GM12878 (cell line): ENCODE measurements at regions of chr17 and their contacts with region 1.

Region 1: GRCh38 chr17:48074315-48075081 is 26.3 kb downstream of the NFE2L1 start:
- DNase-seq: no peak
- ATAC-seq: peak; percentile 84
- H3K4me3 ChIP-seq: no peak overlapping the region
- H3K27ac ChIP-seq: no peak overlapping the region
- H3K4me1 ChIP-seq: no peaks in the 10 kb centered on the region
- H3K27me3 ChIP-seq: no peaks in the 10 kb centered on the region
- CTCF ChIP-seq: peak; percentile 75 to 91 (median 79)
- EP300 ChIP-seq: no peak
- POLR2A ChIP-seq: no peak
- RAD21 ChIP-seq: peak; percentile 86

Region 2: DNA sequence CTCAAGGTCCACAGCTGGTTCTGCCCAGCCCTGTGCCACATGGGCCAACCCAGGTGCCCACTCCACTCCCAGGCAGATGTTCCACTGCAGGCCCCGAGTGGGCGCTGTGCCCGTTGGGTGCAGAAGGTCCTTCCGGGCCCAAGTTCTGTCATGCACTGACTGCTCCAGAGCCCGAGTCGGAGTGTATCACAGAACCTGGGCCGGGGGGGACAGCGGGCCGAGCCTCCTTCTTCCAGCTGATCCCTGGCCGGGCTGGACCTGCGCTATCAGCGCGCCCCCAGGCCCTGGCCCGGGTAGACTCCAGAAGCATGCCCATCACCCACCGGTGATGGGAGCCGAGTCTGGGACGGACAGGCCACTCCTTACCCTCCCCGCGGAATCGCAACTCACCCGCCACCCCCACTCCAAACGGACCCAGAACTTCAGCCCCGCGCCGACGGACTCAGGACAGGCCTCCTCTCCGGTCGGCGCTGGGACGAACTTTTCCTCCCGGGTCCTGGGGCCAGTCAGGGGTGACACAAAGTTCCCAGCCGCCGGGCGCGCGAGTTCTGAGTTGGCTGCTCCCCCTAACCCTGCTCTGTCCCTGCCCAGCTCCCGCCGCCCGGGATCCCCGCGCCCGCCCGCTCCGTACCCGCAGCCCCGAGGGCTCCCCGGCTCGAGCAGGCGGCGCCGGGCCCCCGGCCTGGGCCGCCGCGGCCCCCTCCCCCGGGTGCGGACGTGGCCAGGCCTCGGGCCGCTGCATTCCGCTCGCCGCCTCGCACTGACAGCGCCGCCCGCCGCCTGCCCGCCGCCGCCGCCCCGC is 37.3 kb before region 1 on chr17 and contains the start of gene COPZ2:
- CTCF ChIA-PET with region 1: interaction called, 176 read pairs
- POLR2A ChIA-PET with region 1: interaction called, 3 read pairs
- RAD21 ChIA-PET with region 1: interaction called, 6 read pairs
- SMC1A ChIA-PET with region 1: interaction called, 14 read pairs
- in situ Hi-C with region 1: no loop called
- intact Hi-C with region 1: no loop called
- DNase-seq: no peak
- ATAC-seq: peak; percentile 93
- H3K4me3 ChIP-seq: peak within 1 kb of the TSS; percentile 73
- H3K27ac ChIP-seq: no peak within 1 kb of the TSS
- H3K4me1 ChIP-seq: peaks cover 9% of the 10 kb centered on the region
- H3K27me3 ChIP-seq: peaks cover 3 to 4% of the 10 kb centered on the region in 2 experiments; a peak in 3 of 4 replicates
- CTCF ChIP-seq: peak; percentile 67 to 91 (median 73)
- EP300 ChIP-seq: no peak
- POLR2A ChIP-seq: no peak
- RAD21 ChIP-seq: peak; percentile 20; the same call in 1 of the 2 replicates
- polyA plus RNA-seq, gene COPZ2: 2.5 to 2.9 TPM

Region 3: DNA sequence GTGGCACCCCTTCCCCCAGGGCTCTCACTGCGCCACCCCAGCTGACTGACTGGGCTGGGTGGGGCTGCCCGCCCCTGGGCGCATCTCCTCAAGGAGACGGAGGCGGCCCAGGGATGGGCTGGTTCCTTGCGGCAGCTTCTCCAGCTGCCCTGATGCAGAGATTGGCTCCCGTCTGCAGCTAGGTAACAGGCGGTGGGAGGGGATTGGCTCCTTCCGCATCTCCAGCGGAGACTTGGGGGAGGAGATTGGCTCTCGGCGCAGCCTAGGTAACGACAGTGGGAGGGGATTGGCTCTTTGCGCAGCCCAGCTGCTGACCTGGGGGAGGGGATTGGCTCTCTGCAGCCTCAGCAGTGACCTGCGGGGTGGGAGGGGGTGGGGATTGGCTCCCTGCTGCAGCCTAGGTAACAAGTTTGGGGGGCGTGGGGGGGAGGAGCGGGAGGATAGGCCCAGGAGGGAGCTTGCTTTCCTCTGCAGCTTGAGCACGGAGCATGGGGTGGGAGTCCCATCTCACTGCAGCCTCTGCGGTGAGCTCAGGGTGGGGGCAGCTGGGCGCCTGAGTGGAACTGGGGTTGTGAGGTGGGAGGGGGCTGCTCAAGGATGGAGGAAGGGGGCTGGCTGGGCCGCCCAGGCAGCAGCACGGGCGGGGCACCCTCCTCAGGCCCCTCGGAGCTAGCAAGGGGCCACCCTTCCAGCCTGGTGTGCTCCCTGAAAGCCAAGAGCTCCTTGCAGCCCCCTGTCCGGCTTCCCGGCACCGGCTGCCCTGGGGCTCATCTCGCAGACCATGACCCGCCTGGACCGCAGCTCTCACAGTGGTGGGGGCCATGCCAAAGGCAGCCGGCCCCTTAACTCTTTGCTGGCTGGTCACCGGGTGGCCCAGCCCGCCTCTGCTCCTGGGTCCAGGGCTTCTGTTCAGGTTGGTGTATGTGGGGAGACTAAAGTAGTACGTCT is 20.0 kb before region 1 on chr17:
- CTCF ChIA-PET with region 1: interaction called, 43 read pairs
- POLR2A ChIA-PET with region 1: interaction called, 6 read pairs
- RAD21 ChIA-PET with region 1: interaction called, 5 read pairs
- SMC1A ChIA-PET with region 1: interaction called, 15 read pairs
- in situ Hi-C with region 1: no loop called
- intact Hi-C with region 1: no loop called
- DNase-seq: no peak
- ATAC-seq: peak; percentile 7
- H3K4me3 ChIP-seq: peak overlapping the region; percentile 64; the same call in 1 of the 2 replicates
- H3K27ac ChIP-seq: peak overlapping the region; percentile 68
- H3K4me1 ChIP-seq: peaks cover 29% of the 10 kb centered on the region
- H3K27me3 ChIP-seq: no peaks in the 10 kb centered on the region
- CTCF ChIP-seq: no peak
- EP300 ChIP-seq: no peak
- POLR2A ChIP-seq: no peak; the same call in 1 of the 2 replicates
- RAD21 ChIP-seq: no peak

Region 4: GRCh38 chr17:48093341-48094045 is 19.0 kb after region 1 on chr17:
- CTCF ChIA-PET with region 1: interaction called, 525 read pairs
- POLR2A ChIA-PET with region 1: interaction called, 3 read pairs
- RAD21 ChIA-PET with region 1: interaction called, 30 read pairs
- SMC1A ChIA-PET with region 1: interaction called, 15 read pairs
- in situ Hi-C with region 1: no loop called
- intact Hi-C with region 1: no loop called
- DNase-seq: no peak
- ATAC-seq: no peak
- H3K4me3 ChIP-seq: no peak overlapping the region
- H3K27ac ChIP-seq: no peak overlapping the region
- H3K4me1 ChIP-seq: peaks cover 16% of the 10 kb centered on the region
- H3K27me3 ChIP-seq: no peaks in the 10 kb centered on the region
- CTCF ChIP-seq: no peak
- EP300 ChIP-seq: no peak
- POLR2A ChIP-seq: no peak
- RAD21 ChIP-seq: no peak

Region 5: DNA sequence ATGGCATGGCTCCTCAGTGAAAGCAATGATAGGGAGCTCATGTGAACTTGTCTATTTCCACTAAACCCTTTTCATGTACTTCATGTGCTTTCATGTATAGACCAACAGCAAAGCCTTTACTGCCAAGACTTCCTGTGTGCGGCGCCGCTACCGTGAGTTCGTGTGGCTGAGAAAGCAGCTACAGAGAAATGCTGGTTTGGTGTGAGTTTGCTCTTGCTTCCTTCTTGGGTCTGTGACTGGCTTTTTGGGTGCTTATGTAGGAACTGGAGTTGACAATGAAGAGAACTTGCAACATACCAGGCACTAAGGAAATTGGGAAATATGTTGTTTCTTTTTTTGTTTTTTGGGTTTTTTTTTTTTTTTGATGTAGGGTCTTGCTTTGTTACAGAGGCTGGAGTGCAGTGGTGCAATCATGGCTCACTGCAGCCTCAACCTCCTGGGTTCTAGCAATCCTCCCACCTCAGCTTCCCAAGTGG is 38.7 kb after region 1 on chr17:
- CTCF ChIA-PET with region 1: interaction called, 525 read pairs
- POLR2A ChIA-PET with region 1: interaction called, 10 read pairs
- RAD21 ChIA-PET with region 1: interaction called, 18 read pairs
- SMC1A ChIA-PET with region 1: interaction called, 38 read pairs
- in situ Hi-C with region 1: no loop called
- intact Hi-C with region 1: no loop called
- DNase-seq: peak; percentile 71
- ATAC-seq: peak; percentile 55
- H3K4me3 ChIP-seq: peak overlapping the region; percentile 97
- H3K27ac ChIP-seq: peak overlapping the region; percentile 93
- H3K4me1 ChIP-seq: no peaks in the 10 kb centered on the region; the same call in none of the 2 replicates
- H3K27me3 ChIP-seq: no peaks in the 10 kb centered on the region
- CTCF ChIP-seq: no peak
- EP300 ChIP-seq: no peak
- POLR2A ChIP-seq: peak; percentile 55; the same call in 1 of the 2 replicates
- RAD21 ChIP-seq: no peak

Region 6: DNA sequence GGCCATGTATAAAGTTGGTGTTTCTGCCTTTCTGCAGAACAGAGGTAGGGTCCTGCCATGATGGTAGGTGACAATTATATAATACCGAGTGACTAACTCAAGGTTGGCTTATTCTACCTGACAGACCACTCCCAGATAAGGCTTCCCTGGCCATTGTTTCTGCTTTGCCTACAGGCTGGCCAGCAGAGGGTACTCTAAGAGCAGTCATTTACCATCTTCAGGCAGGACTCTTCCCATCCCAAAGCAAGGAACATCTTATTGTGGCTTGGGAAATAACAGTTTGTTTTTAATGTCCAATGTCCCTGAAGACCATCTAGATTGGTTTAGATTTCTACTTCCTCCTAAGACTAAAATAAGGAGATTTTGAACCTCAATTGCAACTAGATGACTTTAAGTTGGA is 107.2 kb after region 1 on chr17:
- CTCF ChIA-PET with region 1: no interaction called
- POLR2A ChIA-PET with region 1: no interaction called
- RAD21 ChIA-PET with region 1: no interaction called
- SMC1A ChIA-PET with region 1: no interaction called
- in situ Hi-C with region 1: no loop called
- intact Hi-C with region 1: no loop called
- DNase-seq: no peak
- ATAC-seq: no peak
- H3K4me3 ChIP-seq: no peak overlapping the region
- H3K27ac ChIP-seq: no peak overlapping the region
- H3K4me1 ChIP-seq: peaks cover 6% of the 10 kb centered on the region
- H3K27me3 ChIP-seq: no peaks in the 10 kb centered on the region
- CTCF ChIP-seq: peak in 2 of 3 experiments; percentile 28 to 31; a peak in 3 of 6 replicates
- EP300 ChIP-seq: no peak
- POLR2A ChIP-seq: no peak
- RAD21 ChIP-seq: no peak; the same call in 1 of the 2 replicates

Region 7: GRCh38 chr17:48618256-48618897 is 543.9 kb after region 1 on chr17:
- CTCF ChIA-PET with region 1: interaction called, 12 read pairs
- POLR2A ChIA-PET with region 1: no interaction called
- RAD21 ChIA-PET with region 1: no interaction called
- SMC1A ChIA-PET with region 1: no interaction called
- in situ Hi-C with region 1: no loop called
- intact Hi-C with region 1: no loop called
- DNase-seq: no peak
- ATAC-seq: peak; percentile 88
- H3K4me3 ChIP-seq: no peak overlapping the region
- H3K27ac ChIP-seq: no peak overlapping the region
- H3K4me1 ChIP-seq: no peaks in the 10 kb centered on the region
- H3K27me3 ChIP-seq: peaks cover 36 to 46% of the 10 kb centered on the region in 2 experiments
- CTCF ChIP-seq: peak; percentile 94 to 97 (median 96)
- EP300 ChIP-seq: no peak
- POLR2A ChIP-seq: no peak
- RAD21 ChIP-seq: peak; percentile 85